ENCODE measurements at regions of chr3 and their contacts with region 1.

Region 1: GRCh38 chr3:119240591-119241434 is at the start of gene B4GALT4:
- DNase-seq: peak; percentile 70
- H3K4me3 Mint-ChIP-seq: peak within 1 kb of the TSS; percentile 88
- H3K27ac Mint-ChIP-seq: peak within 1 kb of the TSS; percentile 96
- H3K4me1 Mint-ChIP-seq: peaks cover 31% of the 10 kb centered on the region
- H3K27me3 Mint-ChIP-seq: no peaks in the 10 kb centered on the region
- total RNA-seq, gene B4GALT4: 22.0 to 22.8 TPM

Region 2: GRCh38 chr3:119034256-119035013 is 206.4 kb before region 1 on chr3 and contains the start of gene IGSF11:
- CTCF ChIA-PET with region 1: interaction called, 17 read pairs
- intact Hi-C with region 1: loop called (anchors 1 kb)
- DNase-seq: peak; percentile 67
- H3K4me3 Mint-ChIP-seq: peak within 1 kb of the TSS; percentile 82
- H3K27ac Mint-ChIP-seq: no peak within 1 kb of the TSS
- H3K4me1 Mint-ChIP-seq: peaks cover 6% of the 10 kb centered on the region
- H3K27me3 Mint-ChIP-seq: peaks cover 38% of the 10 kb centered on the region
- total RNA-seq, gene IGSF11: 0.07 to 0.12 TPM

Region 3: GRCh38 chr3:119219069-119219468 is 21.7 kb before region 1 on chr3:
- CTCF ChIA-PET with region 1: interaction called, 28 read pairs
- intact Hi-C with region 1: loop called (anchors 1 kb)
- DNase-seq: peak; percentile 78
- H3K4me3 Mint-ChIP-seq: peak overlapping the region; percentile 63
- H3K27ac Mint-ChIP-seq: peak overlapping the region; percentile 94
- H3K4me1 Mint-ChIP-seq: peaks cover 74% of the 10 kb centered on the region
- H3K27me3 Mint-ChIP-seq: no peaks in the 10 kb centered on the region

Region 4: GRCh38 chr3:119322835-119323722 is 82.3 kb after region 1 on chr3:
- CTCF ChIA-PET with region 1: interaction called, 3 read pairs
- intact Hi-C with region 1: loop called (anchors 1 kb)
- DNase-seq: peak; percentile 96
- H3K4me3 Mint-ChIP-seq: peak overlapping the region; percentile 83
- H3K27ac Mint-ChIP-seq: peak overlapping the region; percentile 94
- H3K4me1 Mint-ChIP-seq: peaks cover 47% of the 10 kb centered on the region
- H3K27me3 Mint-ChIP-seq: no peaks in the 10 kb centered on the region

Region 5: GRCh38 chr3:119637679-119638525 is 397.1 kb after region 1 on chr3:
- CTCF ChIA-PET with region 1: no interaction called
- intact Hi-C with region 1: loop called (anchors 1 kb)
- DNase-seq: peak; percentile 19
- H3K4me3 Mint-ChIP-seq: no peak overlapping the region
- H3K27ac Mint-ChIP-seq: peak overlapping the region; percentile 91
- H3K4me1 Mint-ChIP-seq: peaks cover 36% of the 10 kb centered on the region
- H3K27me3 Mint-ChIP-seq: no peaks in the 10 kb centered on the region

Region 6: DNA sequence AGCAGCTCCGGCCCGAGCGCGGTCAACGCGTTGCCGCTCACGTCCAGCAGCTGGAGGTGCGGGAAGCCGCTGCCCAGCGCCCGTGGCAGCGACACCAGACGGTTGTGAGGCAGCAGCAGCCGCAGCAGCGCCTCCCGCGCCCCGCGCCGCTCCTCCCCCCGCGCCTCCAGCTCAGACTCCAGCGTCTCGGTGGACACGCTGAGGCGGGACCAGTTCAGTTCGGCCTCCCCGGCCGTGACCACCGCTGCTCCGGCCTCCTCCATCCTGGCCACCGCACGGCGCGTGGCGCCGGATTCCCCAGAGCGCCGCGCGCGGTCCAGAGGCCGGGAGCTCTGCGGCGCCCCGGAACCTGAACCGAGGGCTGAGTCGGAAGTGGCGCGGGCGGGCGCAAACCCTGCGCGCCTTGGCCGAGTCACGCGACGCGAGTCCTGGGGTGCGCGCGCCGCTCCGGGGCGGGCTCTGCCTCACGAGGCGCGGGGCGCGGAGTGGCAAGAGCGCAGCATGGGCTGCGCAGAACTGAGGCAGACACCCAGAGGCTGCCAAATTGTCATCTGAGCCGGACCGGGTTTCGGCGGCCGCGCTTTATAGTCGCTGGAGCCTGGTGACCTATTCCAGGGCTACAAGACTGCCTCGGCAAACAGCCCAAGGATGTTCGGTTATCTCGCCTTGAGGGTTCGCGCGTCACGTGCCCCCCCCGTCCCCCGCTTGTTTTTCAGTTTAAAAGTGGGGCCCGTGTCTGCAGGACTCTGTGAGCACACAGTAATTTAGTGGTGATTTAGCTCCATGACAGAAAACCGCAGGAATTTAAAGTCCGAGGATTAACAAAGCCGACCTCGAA is 1108.4 kb after region 1 on chr3 and contains the start of gene LRRC58:
- CTCF ChIA-PET with region 1: no interaction called
- intact Hi-C with region 1: loop called (anchors 10 kb)
- DNase-seq: peak; percentile 85
- H3K4me3 Mint-ChIP-seq: peak within 1 kb of the TSS; percentile 89
- H3K27ac Mint-ChIP-seq: peak within 1 kb of the TSS; percentile 89
- H3K4me1 Mint-ChIP-seq: peaks cover 40% of the 10 kb centered on the region
- H3K27me3 Mint-ChIP-seq: no peaks in the 10 kb centered on the region
- total RNA-seq, gene LRRC58: 17.6 to 18.0 TPM

Measured in activated naive CD4-positive, alpha-beta T cell treated with anti-CD3 and anti-CD28 coated beads for 36 hours (primary cell).